ENCODE measurements at regions of chr10 and their contacts with region 1.

Region 1: DNA sequence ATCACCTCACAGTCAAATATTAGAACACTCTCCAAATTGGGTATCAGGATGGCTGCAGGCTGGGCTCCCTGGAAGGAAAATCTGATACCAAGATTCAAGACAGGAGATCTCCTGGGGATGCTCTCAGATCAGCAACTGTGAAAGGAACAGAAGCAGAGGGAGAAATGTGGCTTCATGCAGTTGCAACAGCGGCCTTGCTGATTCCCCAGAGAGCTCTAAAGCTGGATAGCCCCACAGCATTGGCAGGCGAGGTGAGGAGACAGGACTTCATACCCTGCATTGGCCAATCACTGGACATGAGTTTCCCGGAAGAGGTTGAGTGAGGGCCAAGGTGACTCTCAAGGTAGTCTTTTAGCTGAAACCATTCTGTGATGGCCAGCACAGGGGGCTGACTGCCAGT is 190.6 kb downstream of the PTPN20 start:
- DNase-seq: no peak
- ATAC-seq: no peak
- H3K4me3 ChIP-seq: no peak overlapping the region
- H3K27ac ChIP-seq: no peak overlapping the region
- H3K4me1 ChIP-seq: no peaks in the 10 kb centered on the region
- H3K27me3 ChIP-seq: no peaks in the 10 kb centered on the region; the same call in 1 of the 2 replicates
- CTCF ChIP-seq: no peak

Region 2: DNA sequence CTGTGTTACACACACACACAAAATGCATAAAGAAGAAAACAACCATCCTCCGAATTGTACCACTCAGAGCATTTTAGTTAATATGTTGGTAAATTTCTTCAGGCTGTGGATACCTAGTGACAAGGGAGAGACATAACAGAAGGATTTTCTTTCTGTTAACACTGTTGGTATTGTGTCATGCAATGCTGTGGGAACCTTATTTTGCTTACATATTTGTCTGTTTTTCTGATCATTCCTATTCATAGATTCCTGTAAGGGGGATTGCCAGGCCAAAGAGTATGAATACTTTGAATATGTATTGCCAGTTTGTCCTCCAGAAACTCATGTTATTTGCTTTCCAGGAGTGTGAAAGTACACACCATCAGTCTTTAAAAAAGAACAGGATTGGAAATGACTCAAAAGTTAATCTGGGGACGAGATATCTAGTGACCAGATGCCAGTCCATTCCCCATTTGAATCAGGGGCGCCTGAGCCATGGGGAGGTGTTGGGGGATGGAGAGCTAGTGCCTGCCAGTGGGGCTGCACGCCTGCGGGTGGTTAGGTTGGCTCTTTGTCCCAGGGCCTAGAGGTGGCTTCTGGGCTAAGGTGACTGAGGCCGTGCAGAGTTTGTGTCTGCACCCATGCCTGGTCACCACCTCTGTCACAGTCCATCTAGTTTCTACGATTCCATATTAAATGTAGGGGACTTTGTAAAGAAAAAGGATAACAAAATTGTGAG is 48.6 kb before region 1 on chr10:
- CTCF ChIA-PET with region 1: no interaction called
- POLR2A ChIA-PET with region 1: no interaction called
- in situ Hi-C with region 1: no loop called
- intact Hi-C with region 1: no loop called
- DNase-seq: no peak
- ATAC-seq: no peak
- H3K4me3 ChIP-seq: no peak overlapping the region
- H3K27ac ChIP-seq: no peak overlapping the region
- H3K4me1 ChIP-seq: no peaks in the 10 kb centered on the region
- H3K27me3 ChIP-seq: no peaks in the 10 kb centered on the region
- CTCF ChIP-seq: no peak

Region 3: GRCh38 chr10:47063858-47064257 is 37.9 kb before region 1 on chr10:
- CTCF ChIA-PET with region 1: no interaction called
- POLR2A ChIA-PET with region 1: no interaction called
- in situ Hi-C with region 1: no loop called
- intact Hi-C with region 1: no loop called
- DNase-seq: no peak
- ATAC-seq: no peak
- H3K4me3 ChIP-seq: no peak overlapping the region
- H3K27ac ChIP-seq: no peak overlapping the region
- H3K4me1 ChIP-seq: no peaks in the 10 kb centered on the region; the same call in 1 of the 2 replicates
- H3K27me3 ChIP-seq: peaks cover 2% of the 10 kb centered on the region; the same call in 1 of the 2 replicates
- CTCF ChIP-seq: no peak

Region 4: DNA sequence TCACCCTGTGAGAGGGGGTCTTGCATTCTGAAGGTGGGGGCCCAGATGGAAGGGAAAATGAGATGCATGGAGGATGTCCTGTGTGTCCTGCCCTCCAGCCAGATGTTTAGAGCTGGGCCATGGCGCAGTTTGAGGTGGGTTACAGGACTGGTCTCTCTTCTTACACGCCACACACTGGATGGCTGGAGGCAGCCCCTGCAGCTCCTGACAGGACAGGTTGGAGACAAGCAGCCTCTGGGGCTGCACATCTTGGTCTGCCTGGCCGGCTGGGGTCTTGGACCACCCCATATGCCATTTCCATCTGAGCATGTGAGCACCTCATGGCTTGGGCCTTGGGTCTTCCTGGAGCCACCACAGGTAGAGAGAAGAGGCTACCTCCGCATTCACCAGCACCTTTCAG is 16.5 kb before region 1 on chr10:
- CTCF ChIA-PET with region 1: no interaction called
- POLR2A ChIA-PET with region 1: no interaction called
- in situ Hi-C with region 1: no loop called
- intact Hi-C with region 1: loop called (anchors 1 kb)
- DNase-seq: no peak
- ATAC-seq: no peak
- H3K4me3 ChIP-seq: no peak overlapping the region
- H3K27ac ChIP-seq: no peak overlapping the region
- H3K4me1 ChIP-seq: no peaks in the 10 kb centered on the region
- H3K27me3 ChIP-seq: no peaks in the 10 kb centered on the region
- CTCF ChIP-seq: no peak

Measured in Panc1 (cell line).